ENCODE measurements at regions of chr1 and their contacts with region 1.

Region 1: GRCh38 chr1:56931686-56932085 is 34.1 kb downstream of the C8B start:
- DNase-seq: no peak
- ATAC-seq: no peak
- H3K4me3 ChIP-seq: no peak overlapping the region
- H3K4me3 Mint-ChIP-seq: no peak overlapping the region
- H3K27ac ChIP-seq: no peak overlapping the region
- H3K27ac Mint-ChIP-seq: no peak overlapping the region
- H3K4me1 ChIP-seq: no peaks in the 10 kb centered on the region
- H3K4me1 Mint-ChIP-seq: no peaks in the 10 kb centered on the region
- H3K27me3 ChIP-seq: no peaks in the 10 kb centered on the region
- H3K27me3 Mint-ChIP-seq: peaks cover 5% of the 10 kb centered on the region
- CTCF ChIP-seq: no peak

Region 2: GRCh38 chr1:56986397-56986796 is 54.7 kb after region 1 on chr1:
- CTCF ChIA-PET with region 1: no interaction called
- POLR2A ChIA-PET with region 1: no interaction called
- intact Hi-C with region 1: loop called in 1 of 2 experiments (anchors 2 kb)
- DNase-seq: no peak
- ATAC-seq: no peak
- H3K4me3 ChIP-seq: no peak overlapping the region
- H3K4me3 Mint-ChIP-seq: no peak overlapping the region
- H3K27ac ChIP-seq: no peak overlapping the region
- H3K27ac Mint-ChIP-seq: no peak overlapping the region
- H3K4me1 ChIP-seq: no peaks in the 10 kb centered on the region
- H3K4me1 Mint-ChIP-seq: no peaks in the 10 kb centered on the region
- H3K27me3 ChIP-seq: no peaks in the 10 kb centered on the region
- H3K27me3 Mint-ChIP-seq: peaks cover 3% of the 10 kb centered on the region
- CTCF ChIP-seq: no peak

Region 3: GRCh38 chr1:57172040-57172439 is 240.4 kb after region 1 on chr1:
- CTCF ChIA-PET with region 1: no interaction called
- POLR2A ChIA-PET with region 1: no interaction called
- intact Hi-C with region 1: no loop called
- DNase-seq: no peak
- ATAC-seq: no peak
- H3K4me3 ChIP-seq: no peak overlapping the region
- H3K4me3 Mint-ChIP-seq: no peak overlapping the region
- H3K27ac ChIP-seq: no peak overlapping the region
- H3K27ac Mint-ChIP-seq: no peak overlapping the region
- H3K4me1 ChIP-seq: no peaks in the 10 kb centered on the region
- H3K4me1 Mint-ChIP-seq: no peaks in the 10 kb centered on the region
- H3K27me3 ChIP-seq: no peaks in the 10 kb centered on the region
- H3K27me3 Mint-ChIP-seq: no peaks in the 10 kb centered on the region
- CTCF ChIP-seq: no peak